ENCODE measurements at regions of chr16 and their contacts with region 1.

Region 1: GRCh38 chr16:31179747-31180459 is at the start of gene FUS:
- DNase-seq: peak; percentile 88 to 97 (median 95)
- ATAC-seq: peak; percentile 87
- H3K4me3 ChIP-seq: peak within 1 kb of the TSS; percentile 76
- H3K4me3 Mint-ChIP-seq: peak within 1 kb of the TSS; percentile 92 to 99 (median 96)
- H3K27ac ChIP-seq: peak within 1 kb of the TSS; percentile 90
- H3K27ac Mint-ChIP-seq: peak within 1 kb of the TSS; percentile 96 to 100 (median 99)
- H3K4me1 ChIP-seq: peaks cover 56% of the 10 kb centered on the region in 2 donors
- H3K4me1 Mint-ChIP-seq: peaks cover 49 to 72% (median 56%) of the 10 kb centered on the region in 7 donors
- H3K27me3 ChIP-seq: no peaks in the 10 kb centered on the region
- H3K27me3 Mint-ChIP-seq: peaks cover 0 to 3% (median 0%) of the 10 kb centered on the region in 5 donors
- total RNA-seq, gene FUS: 597 to 956 (median 714) TPM

Region 2: GRCh38 chr16:31094424-31095120 is 85.3 kb before region 1 on chr16 and contains the start of gene VKORC1:
- CTCF ChIA-PET with region 1: no interaction called
- POLR2A ChIA-PET with region 1: interaction called, 5 read pairs
- intact Hi-C with region 1: loop called in 1 of 2 experiments (anchors 2 kb)
- DNase-seq: peak; percentile 66 to 89 (median 88)
- ATAC-seq: peak; percentile 93
- H3K4me3 ChIP-seq: peak within 1 kb of the TSS; percentile 99
- H3K4me3 Mint-ChIP-seq: peak within 1 kb of the TSS; percentile 92 to 99 (median 94)
- H3K27ac ChIP-seq: peak within 1 kb of the TSS; percentile 85
- H3K27ac Mint-ChIP-seq: peak within 1 kb of the TSS; percentile 67 to 95 (median 91)
- H3K4me1 ChIP-seq: peaks cover 14 to 18% of the 10 kb centered on the region in 2 donors
- H3K4me1 Mint-ChIP-seq: peaks cover 14 to 42% (median 29%) of the 10 kb centered on the region in 7 donors
- H3K27me3 ChIP-seq: no peaks in the 10 kb centered on the region
- H3K27me3 Mint-ChIP-seq: no peaks in the 10 kb centered on the region
- total RNA-seq, gene VKORC1: 29.5 to 69.3 (median 35.6) TPM

Region 3: GRCh38 chr16:31117391-31118197 is 62.3 kb before region 1 on chr16 and contains the start of gene KAT8:
- CTCF ChIA-PET with region 1: interaction called, 4 read pairs
- POLR2A ChIA-PET with region 1: interaction called, 59 read pairs
- intact Hi-C with region 1: loop called (anchors 1 kb)
- DNase-seq: peak; percentile 88 to 99 (median 97)
- ATAC-seq: peak; percentile 95
- H3K4me3 ChIP-seq: peak within 1 kb of the TSS; percentile 65
- H3K4me3 Mint-ChIP-seq: peak within 1 kb of the TSS; percentile 86 to 95 (median 90)
- H3K27ac ChIP-seq: peak within 1 kb of the TSS; percentile 98
- H3K27ac Mint-ChIP-seq: peak within 1 kb of the TSS; percentile 77 to 96 (median 89)
- H3K4me1 ChIP-seq: peaks cover 7 to 15% of the 10 kb centered on the region in 2 donors
- H3K4me1 Mint-ChIP-seq: peaks cover 12 to 32% (median 24%) of the 10 kb centered on the region in 7 donors
- H3K27me3 ChIP-seq: no peaks in the 10 kb centered on the region
- H3K27me3 Mint-ChIP-seq: no peaks in the 10 kb centered on the region
- total RNA-seq, gene KAT8: 63.0 to 134 (median 112) TPM

Region 4: GRCh38 chr16:31157136-31157535 is 22.8 kb before region 1 on chr16:
- CTCF ChIA-PET with region 1: interaction called, 3 read pairs
- POLR2A ChIA-PET with region 1: interaction called, 32 read pairs
- intact Hi-C with region 1: loop called (anchors 1 to 2 kb)
- DNase-seq: no peak
- ATAC-seq: peak; percentile 74
- H3K4me3 ChIP-seq: no peak overlapping the region
- H3K4me3 Mint-ChIP-seq: peak overlapping the region in 8 of 10 donors; percentile 7 to 66 (median 36)
- H3K27ac ChIP-seq: no peak overlapping the region
- H3K27ac Mint-ChIP-seq: peak overlapping the region in 3 of 9 donors; percentile 16 to 38 (median 25)
- H3K4me1 ChIP-seq: no peaks in the 10 kb centered on the region
- H3K4me1 Mint-ChIP-seq: peaks cover 0 to 12% (median 10%) of the 10 kb centered on the region in 7 donors
- H3K27me3 ChIP-seq: no peaks in the 10 kb centered on the region
- H3K27me3 Mint-ChIP-seq: peaks cover 0 to 17% (median 0%) of the 10 kb centered on the region in 5 donors

Region 5: DNA sequence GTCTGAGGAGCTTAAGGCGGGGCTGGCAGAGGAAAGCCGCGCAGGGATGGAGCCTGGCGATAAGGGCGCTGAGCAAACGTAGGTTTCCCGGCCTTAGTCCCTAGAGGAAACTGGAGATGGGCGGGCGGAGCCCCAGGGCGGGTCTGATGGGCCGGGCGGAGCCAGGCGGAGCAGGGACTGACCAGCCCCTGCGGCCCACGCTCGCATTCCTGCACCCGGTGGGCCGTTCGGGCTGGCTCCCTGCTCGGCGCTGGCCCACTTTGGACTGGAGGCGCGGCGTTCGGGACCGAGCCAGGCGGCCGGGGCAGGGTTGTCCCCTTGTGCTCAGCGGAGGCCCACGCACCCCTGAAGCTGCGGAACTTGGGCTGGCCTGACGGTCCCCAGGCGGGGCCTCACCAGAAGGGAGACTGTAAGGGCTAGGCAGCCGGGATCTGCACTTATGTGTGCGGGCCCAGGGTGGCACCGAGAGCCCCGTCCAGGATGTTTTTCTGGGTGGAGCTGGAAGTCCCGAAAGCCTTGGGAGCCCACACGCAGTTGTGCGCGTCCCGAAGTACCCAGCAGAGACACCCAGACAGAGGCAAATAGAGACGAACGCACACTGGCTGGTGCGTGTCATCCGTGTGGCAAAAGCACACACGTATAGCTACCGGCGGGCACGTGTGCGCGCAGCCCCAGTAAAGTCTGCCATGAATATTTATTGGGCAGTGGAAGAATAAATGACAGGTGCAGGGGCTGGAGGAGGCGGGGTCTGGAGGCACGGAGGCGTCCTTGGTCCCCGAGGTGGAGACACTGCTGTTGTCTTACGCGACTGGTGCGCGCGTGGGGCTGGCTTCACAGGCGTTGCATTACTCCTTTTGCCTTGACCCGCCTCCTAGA is 35.6 kb after region 1 on chr16:
- CTCF ChIA-PET with region 1: no interaction called
- POLR2A ChIA-PET with region 1: interaction called, 11 read pairs
- intact Hi-C with region 1: no loop called
- DNase-seq: peak in 1 of 9 donors; percentile 43
- ATAC-seq: peak; percentile 65
- H3K4me3 ChIP-seq: peak overlapping the region; percentile 30
- H3K4me3 Mint-ChIP-seq: peak overlapping the region; percentile 70 to 88 (median 81)
- H3K27ac ChIP-seq: no peak overlapping the region
- H3K27ac Mint-ChIP-seq: no peak overlapping the region
- H3K4me1 ChIP-seq: peaks cover 18 to 25% of the 10 kb centered on the region in 2 donors
- H3K4me1 Mint-ChIP-seq: peaks cover 17 to 40% (median 19%) of the 10 kb centered on the region in 7 donors
- H3K27me3 ChIP-seq: peaks cover 11 to 19% of the 10 kb centered on the region in 2 donors
- H3K27me3 Mint-ChIP-seq: peaks cover 34 to 54% (median 36%) of the 10 kb centered on the region in 5 donors

Region 6: GRCh38 chr16:31713071-31713944 is 533.4 kb after region 1 on chr16:
- CTCF ChIA-PET with region 1: no interaction called
- POLR2A ChIA-PET with region 1: interaction called, 3 read pairs
- intact Hi-C with region 1: loop called in 1 of 2 experiments (anchors 10 kb)
- DNase-seq: peak; percentile 74 to 91 (median 87)
- ATAC-seq: peak; percentile 88
- H3K4me3 ChIP-seq: peak overlapping the region; percentile 98
- H3K4me3 Mint-ChIP-seq: peak overlapping the region; percentile 78 to 100 (median 99)
- H3K27ac ChIP-seq: peak overlapping the region; percentile 88
- H3K27ac Mint-ChIP-seq: peak overlapping the region; percentile 97 to 100 (median 98)
- H3K4me1 ChIP-seq: peaks cover 15 to 34% of the 10 kb centered on the region in 2 donors
- H3K4me1 Mint-ChIP-seq: peaks cover 34 to 68% (median 62%) of the 10 kb centered on the region in 7 donors
- H3K27me3 ChIP-seq: no peaks in the 10 kb centered on the region
- H3K27me3 Mint-ChIP-seq: no peaks in the 10 kb centered on the region

Measured in naive thymus-derived CD4-positive, alpha-beta T cell (primary cell).